AG04449 (cell line): ENCODE measurements at regions of chr22 and their contacts with region 1.

Region 1: DNA sequence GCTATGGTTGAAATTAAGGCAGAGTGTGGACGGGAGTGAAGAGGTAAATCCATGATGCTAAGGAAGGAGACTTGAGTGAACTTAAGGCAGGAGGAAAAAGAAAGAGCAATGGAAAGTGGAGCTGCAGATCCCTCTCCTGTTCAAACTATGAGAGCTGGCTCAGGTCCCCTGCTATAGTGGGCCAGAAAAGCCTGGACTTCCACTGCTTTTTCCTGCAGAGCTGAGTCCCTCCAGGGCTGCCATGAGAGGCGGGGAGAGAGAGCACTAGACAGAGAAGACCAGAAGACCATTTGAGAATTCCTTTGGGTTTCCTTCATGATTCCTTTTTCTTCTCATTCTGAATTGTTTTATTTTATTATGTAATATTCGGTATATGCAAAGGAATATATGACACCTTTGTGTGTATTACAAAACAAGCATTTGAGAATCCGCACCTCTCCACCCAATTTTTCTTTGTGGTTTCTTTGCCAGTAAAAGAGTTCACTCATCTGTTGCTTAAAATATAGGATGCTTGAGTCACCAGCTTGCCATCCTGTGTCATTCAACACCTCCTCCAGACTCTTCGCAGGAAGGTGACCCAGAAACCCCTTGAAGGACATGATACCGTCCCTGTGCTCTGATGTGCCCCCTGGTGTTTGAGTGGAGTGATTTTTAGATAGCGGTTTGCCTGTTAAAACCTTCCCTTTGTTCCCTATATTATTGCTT is 24.4 kb downstream of the SREBF2 start:
- DNase-seq: no peak
- H3K4me3 ChIP-seq: no peak overlapping the region
- CTCF ChIP-seq: peak; percentile 51

Region 2: DNA sequence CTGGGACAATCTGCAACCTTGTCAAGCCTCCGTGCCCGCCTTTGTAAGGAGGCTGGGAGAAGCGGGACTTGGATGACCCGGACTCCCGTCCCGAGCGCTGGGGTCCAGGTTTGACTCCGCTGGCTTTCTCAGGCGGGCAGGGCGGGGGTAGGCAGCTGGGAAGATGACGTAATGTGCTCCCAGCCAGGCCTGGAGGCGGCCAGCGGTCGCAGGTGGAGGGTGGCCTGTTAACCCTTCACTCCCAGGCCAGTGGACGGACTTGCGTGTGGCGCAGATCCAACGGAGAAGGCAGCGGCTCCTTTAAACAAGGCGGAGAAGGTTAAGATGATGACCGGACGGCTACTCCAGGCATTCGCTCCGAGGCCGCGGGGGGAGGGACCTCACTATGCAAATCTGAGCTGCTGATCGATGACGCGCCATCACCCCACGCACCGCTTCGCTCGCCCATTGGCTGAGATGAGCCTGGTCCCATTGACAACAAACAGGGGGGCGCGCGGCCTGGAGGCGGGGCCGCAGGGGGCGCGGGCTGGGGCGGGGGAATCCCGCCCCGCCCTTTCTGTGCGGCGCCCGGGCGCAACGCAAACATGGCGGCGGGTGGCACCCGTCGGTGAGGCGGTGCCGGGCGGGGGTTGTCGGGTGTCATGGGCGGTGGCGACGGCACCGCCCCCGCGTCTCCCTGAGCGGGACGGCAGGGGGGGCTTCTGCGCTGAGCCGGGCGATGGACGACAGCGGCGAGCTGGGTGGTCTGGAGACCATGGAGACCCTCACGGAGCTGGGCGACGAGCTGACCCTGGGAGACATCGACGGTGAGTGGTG is 24.5 kb before region 1 on chr22 and contains the start of gene SREBF2:
- CTCF ChIA-PET with region 1: interaction called, 16 read pairs
- POLR2A ChIA-PET with region 1: interaction called, 5 read pairs
- DNase-seq: peak; percentile 94
- H3K4me3 ChIP-seq: peak within 1 kb of the TSS; percentile 88
- CTCF ChIP-seq: no peak

Region 3: GRCh38 chr22:41841085-41841659 is 16.1 kb before region 1 on chr22:
- CTCF ChIA-PET with region 1: interaction called, 24 read pairs
- POLR2A ChIA-PET with region 1: no interaction called
- DNase-seq: no peak
- H3K4me3 ChIP-seq: no peak overlapping the region
- CTCF ChIP-seq: no peak

Region 4: DNA sequence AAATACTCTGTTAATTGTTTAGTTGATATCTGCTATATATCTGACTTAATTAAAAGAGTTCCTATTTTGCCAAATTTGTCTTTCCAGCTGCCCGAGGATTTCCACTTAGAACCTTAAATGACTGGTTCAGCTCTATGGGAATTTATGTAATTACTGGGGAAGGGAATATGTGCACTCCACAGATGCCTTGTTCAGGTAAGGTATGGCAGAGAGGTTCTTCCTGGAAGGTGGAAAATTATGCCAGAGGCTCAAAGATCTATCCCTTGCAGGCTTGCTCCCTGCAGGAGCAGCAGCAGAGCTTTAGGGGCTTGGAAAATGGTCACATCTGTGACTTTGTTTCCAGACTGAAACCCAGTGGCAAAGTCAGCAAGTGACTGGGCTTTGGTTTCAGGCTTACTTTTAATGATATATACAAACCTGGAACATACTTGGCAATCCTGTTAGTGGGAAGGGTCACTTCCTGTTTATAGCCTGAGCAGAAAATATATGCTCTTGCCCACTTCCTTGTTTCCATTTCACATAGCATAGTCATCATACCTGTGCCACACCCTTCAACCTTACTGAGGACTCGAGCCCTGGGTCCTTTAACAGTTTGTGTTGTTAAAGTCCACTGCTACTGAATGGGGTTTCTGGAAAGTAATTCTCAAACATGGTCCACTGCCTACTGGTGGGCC is 165.0 kb after region 1 on chr22:
- CTCF ChIA-PET with region 1: no interaction called
- POLR2A ChIA-PET with region 1: no interaction called
- DNase-seq: no peak
- H3K4me3 ChIP-seq: no peak overlapping the region
- CTCF ChIP-seq: no peak

Region 5: GRCh38 chr22:42151924-42152635 is 294.8 kb after region 1 on chr22:
- CTCF ChIA-PET with region 1: no interaction called
- POLR2A ChIA-PET with region 1: no interaction called
- DNase-seq: no peak
- H3K4me3 ChIP-seq: no peak overlapping the region
- CTCF ChIP-seq: no peak

Region 6: GRCh38 chr22:42303396-42304323 is 446.4 kb after region 1 on chr22:
- CTCF ChIA-PET with region 1: no interaction called
- POLR2A ChIA-PET with region 1: no interaction called
- DNase-seq: no peak
- H3K4me3 ChIP-seq: no peak overlapping the region
- CTCF ChIP-seq: no peak